ENCODE measurements at regions of chr5 and their contacts with region 1.

Region 1: DNA sequence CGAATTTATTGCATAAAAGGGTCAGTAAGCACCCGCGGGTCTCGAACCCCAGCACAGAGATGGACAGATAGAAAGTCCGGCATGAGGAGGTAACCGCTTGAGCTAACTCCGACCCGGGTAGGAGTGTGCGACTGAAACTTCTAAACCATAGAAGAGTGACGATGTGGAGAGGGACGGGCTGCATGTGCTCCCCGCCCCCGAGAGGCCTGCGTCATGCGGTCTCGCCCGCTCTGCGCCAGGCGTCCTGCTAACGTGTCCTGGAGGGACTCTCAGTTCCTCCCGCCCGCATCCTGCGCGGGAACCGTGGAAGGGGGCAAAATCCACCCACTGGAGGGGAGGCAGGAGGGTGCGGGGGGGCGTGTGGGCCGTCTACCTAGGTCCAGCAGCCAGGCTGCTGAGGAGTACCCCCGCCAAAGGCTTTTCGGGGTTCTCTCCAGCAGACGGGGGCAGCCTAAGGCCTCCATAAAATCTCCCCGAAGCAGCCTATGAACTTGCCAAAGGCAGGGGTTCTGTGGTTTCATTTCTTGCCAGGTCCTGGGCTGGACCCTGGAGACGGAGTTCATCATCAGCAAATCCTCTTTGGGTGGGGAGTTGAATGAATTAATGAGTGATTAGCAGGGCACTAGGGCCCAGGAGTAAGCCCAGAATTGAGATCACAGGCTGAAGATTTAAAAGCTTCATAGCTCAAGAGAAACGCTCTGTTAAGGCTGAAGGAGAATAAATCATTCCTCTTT is 51.9 kb downstream of the TGFBI start:
- DNase-seq: peak; percentile 80 to 83
- H3K4me3 ChIP-seq: peak overlapping the region in 1 of 3 donors; percentile 12
- H3K27ac ChIP-seq: peak overlapping the region in 2 of 3 donors; percentile 47 to 82
- H3K4me1 ChIP-seq: no peaks in the 10 kb centered on the region
- H3K27me3 ChIP-seq: no peaks in the 10 kb centered on the region
- CTCF ChIP-seq: no peak
- POLR2A ChIP-seq: peak in 1 of 2 donors; percentile 45

Region 2: DNA sequence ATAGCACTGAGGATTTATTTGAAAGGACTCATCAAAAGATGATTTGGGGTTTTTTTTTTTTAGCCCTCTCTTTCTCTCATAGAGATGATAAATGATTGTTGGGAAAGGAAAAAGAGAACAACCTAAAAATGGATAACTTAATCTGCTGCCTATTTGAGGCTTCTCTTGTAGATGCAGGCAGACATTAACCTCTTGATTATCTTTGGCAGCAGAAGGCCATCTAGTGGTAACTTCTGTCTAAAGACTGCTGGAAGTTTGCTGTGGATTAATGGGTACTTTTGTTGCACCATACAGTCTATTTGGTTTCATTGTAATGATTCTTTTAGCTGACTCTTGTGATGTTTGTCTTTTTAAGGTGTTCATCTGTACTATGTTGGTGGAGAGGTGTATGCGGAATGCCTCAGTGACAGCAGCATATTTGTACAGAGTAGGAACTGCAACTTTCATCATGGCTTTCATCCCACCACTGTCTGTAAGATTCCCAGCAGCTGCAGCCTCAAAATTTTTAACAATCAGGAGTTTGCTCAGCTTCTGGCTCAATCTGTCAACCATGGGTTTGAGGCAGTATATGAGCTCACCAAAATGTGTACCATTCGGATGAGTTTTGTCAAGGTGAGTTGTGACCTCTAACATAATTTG is 93.5 kb after region 1 on chr5:
- intact Hi-C with region 1: loop called (anchors 10 kb)
- DNase-seq: no peak
- H3K4me3 ChIP-seq: no peak overlapping the region
- H3K27ac ChIP-seq: no peak overlapping the region
- H3K4me1 ChIP-seq: peaks cover 6 to 12% of the 10 kb centered on the region in 2 donors
- H3K27me3 ChIP-seq: no peaks in the 10 kb centered on the region
- CTCF ChIP-seq: peak in 5 of 6 experiments; percentile 15 to 63 (median 58)
- POLR2A ChIP-seq: no peak